Posterior vena cava (tissue), 2 donors: ENCODE measurements at regions of chr14 and their contacts with region 1.

Region 1: GRCh38 chr14:96409701-96410100 is 17.8 kb downstream of the AK7 start:
- DNase-seq: no peak

Region 2: DNA sequence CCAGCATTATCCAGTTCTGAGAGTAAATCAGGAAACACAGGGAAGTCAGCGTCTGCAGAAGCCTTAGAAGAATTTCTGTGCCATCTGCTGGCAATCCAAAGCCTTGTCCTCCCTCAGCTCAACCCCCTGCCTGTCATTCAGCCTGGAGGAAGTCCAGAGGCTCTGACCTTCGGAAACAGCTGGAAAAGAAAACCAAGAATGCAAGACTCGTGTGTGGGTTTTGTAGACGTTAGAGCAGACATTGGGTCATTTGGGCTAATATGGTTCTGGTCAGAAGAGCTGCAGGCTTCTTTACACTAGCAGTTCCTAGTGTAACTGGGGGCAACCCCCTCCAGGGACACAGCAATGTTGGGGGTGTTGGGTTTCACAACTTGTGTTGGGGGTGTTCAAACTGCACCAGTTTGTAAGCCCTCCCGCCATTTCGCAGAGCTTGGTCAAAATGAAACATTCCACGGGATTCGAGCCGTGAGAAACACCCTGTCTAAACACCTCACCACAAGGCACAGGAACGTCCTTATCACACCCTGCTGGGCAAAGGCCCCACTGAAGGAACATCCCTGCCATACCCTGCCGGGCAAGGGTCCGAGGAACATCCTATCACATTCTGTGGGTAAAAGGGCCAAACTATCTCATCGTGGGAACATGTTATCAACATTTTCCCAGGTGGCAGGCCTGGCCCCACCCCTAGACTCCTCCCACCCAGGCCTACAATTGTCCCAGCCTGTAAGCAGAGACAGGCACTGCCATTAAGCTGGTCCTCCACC is 1869.5 kb before region 1 on chr14:
- intact Hi-C with region 1: loop called in 1 of 2 experiments (anchors 5 kb)
- DNase-seq: no peak

Region 3: GRCh38 chr14:95952945-95953724 is 456.6 kb before region 1 on chr14:
- intact Hi-C with region 1: loop called in 1 of 2 experiments (anchors 10 kb)
- DNase-seq: no peak

Region 4: GRCh38 chr14:96297000-96297399 is 112.7 kb before region 1 on chr14:
- intact Hi-C with region 1: loop called in 1 of 2 experiments (anchors 10 kb)
- DNase-seq: no peak